Aorta (tissue), 5 donors: ENCODE measurements at regions of chr22 and their contacts with region 1.

Region 1: DNA sequence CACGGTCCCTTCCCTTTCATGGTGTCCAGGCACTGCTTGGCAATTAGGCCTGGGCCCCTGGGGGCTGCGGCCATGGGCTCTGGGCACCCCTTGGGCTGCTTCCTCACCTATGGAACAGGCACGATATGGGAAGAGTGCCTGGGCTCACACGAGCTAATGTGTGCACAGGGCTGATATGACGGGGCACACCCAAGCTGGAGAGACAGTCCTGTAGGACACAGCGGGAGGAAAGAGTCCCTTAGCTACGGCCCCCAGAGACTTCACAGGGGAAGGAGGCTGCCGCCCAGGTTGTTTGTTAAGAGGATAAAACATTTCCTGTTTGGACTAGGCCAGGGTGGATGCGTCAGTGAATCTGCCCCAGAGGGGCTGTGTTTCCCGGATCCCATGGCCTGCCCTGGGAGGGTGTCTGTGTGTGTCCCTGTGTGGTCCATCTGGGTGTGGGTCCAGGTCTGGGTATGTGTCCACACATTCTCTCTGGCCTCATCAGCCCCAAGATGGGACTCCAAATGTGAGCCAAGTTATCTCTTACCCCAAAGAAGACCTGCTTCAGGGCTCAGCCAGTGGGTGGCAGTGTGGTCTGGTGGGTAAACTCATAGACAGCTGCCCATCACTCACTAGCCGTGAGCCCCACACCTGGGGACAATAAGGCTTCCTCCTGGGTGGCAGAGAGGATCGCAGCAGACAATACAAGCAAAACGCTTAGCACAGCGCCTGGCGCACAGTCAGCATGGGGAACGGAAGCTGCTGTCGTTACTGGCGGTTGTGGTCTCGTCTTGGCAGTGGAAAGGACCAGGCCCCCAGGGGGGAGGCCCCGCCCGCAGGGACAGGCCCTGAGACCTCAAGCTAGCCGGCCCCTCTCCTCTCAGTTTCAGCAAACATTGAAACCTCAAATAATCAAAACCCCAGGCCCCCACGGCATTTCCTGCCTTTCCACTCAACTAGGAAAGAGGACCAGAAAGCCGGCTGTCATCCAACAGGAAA is 3.2 kb upstream of the EMID1 start:
- DNase-seq: peak; percentile 77 to 82
- ATAC-seq: peak; percentile 49
- H3K4me3 ChIP-seq: no peak overlapping the region
- H3K27ac ChIP-seq: no peak overlapping the region
- H3K4me1 ChIP-seq: no peaks in the 10 kb centered on the region
- H3K27me3 ChIP-seq: no peaks in the 10 kb centered on the region

Region 2: GRCh38 chr22:29245637-29246385 is 43.3 kb after region 1 on chr22:
- intact Hi-C with region 1: loop called in 1 of 2 experiments (anchors 5 kb)
- DNase-seq: peak; percentile 76 to 88
- ATAC-seq: peak; percentile 92
- H3K4me3 ChIP-seq: no peak overlapping the region
- H3K27ac ChIP-seq: no peak overlapping the region
- H3K4me1 ChIP-seq: no peaks in the 10 kb centered on the region
- H3K27me3 ChIP-seq: no peaks in the 10 kb centered on the region